ENCODE measurements at regions of chr14 and their contacts with region 1.

Region 1: DNA sequence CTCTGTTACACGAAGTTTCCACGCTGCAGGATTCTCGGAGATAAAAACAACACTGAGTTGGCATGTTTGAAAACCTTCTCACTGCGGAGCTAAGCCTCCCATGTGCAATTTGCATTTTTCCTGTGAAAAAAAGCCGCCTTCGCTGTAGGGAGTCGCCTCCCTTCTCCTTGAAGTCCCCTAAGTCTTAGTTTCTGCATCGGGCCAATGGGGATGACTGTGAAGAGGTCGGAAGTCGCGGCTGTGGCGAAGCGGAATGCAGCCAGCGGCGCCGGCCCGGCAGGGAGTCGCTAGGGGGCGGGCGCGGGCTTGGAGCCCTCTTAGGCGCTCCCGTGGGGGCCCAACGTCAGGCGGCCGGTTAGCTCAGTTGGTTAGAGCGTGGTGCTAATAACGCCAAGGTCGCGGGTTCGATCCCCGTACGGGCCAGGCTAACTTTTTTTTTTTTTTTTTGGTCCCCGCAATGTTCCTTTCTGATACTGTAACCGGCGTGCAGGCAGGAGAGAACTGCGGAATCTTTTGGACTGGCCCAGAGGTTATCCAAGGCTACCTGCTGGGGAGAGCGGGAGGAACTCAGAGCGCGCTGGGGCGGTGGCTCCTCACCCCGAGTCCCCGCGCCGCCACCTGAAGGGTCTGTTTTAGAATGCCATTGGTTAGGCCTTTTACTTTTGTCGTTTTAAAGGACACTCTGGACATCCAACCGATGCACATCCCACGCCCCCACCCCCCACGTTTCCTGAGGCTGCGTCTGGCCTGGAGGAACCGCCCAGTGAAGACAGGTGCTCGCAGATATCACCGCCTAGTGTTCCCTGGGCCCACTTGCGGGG is 2.6 kb upstream of the ZNF839 start:
- DNase-seq: peak; percentile 86 to 100 (median 95)
- ATAC-seq: peak; percentile 55
- H3K4me3 ChIP-seq: peak overlapping the region; percentile 57 to 74
- H3K4me3 Mint-ChIP-seq: peak overlapping the region; percentile 93
- H3K27ac ChIP-seq: peak overlapping the region; percentile 42 to 73
- H3K27ac Mint-ChIP-seq: peak overlapping the region; percentile 94
- H3K4me1 ChIP-seq: peaks cover 42% of the 10 kb centered on the region
- H3K4me1 Mint-ChIP-seq: peaks cover 59% of the 10 kb centered on the region
- H3K27me3 ChIP-seq: no peaks in the 10 kb centered on the region
- H3K27me3 Mint-ChIP-seq: no peaks in the 10 kb centered on the region
- CTCF ChIP-seq: peak; percentile 82

Region 2: GRCh38 chr14:102020058-102020971 is 296.6 kb before region 1 on chr14:
- CTCF ChIA-PET with region 1: no interaction called
- POLR2A ChIA-PET with region 1: no interaction called
- intact Hi-C with region 1: loop called in 1 of 2 experiments (anchors 1 kb)
- DNase-seq: peak; percentile 6 to 80 (median 35)
- ATAC-seq: peak; percentile 90
- H3K4me3 ChIP-seq: no peak overlapping the region
- H3K4me3 Mint-ChIP-seq: peak overlapping the region; percentile 64
- H3K27ac ChIP-seq: peak overlapping the region in 1 of 2 experiments; percentile 54
- H3K27ac Mint-ChIP-seq: peak overlapping the region; percentile 90
- H3K4me1 ChIP-seq: peaks cover 24% of the 10 kb centered on the region
- H3K4me1 Mint-ChIP-seq: peaks cover 19% of the 10 kb centered on the region
- H3K27me3 ChIP-seq: no peaks in the 10 kb centered on the region
- H3K27me3 Mint-ChIP-seq: no peaks in the 10 kb centered on the region
- CTCF ChIP-seq: no peak

Region 3: GRCh38 chr14:102086972-102087761 is 229.8 kb before region 1 on chr14 and contains the start of gene HSP90AA1:
- CTCF ChIA-PET with region 1: interaction called, 3 read pairs
- POLR2A ChIA-PET with region 1: no interaction called
- intact Hi-C with region 1: loop called (anchors 1 to 2 kb)
- DNase-seq: peak; percentile 88 to 98 (median 95)
- ATAC-seq: peak; percentile 74
- H3K4me3 ChIP-seq: peak within 1 kb of the TSS; percentile 75 to 78
- H3K4me3 Mint-ChIP-seq: peak within 1 kb of the TSS; percentile 97
- H3K27ac ChIP-seq: peak within 1 kb of the TSS; percentile 96 to 97
- H3K27ac Mint-ChIP-seq: peak within 1 kb of the TSS; percentile 99
- H3K4me1 ChIP-seq: peaks cover 49% of the 10 kb centered on the region
- H3K4me1 Mint-ChIP-seq: peaks cover 58% of the 10 kb centered on the region
- H3K27me3 ChIP-seq: no peaks in the 10 kb centered on the region
- H3K27me3 Mint-ChIP-seq: no peaks in the 10 kb centered on the region
- CTCF ChIP-seq: no peak
- total RNA-seq, gene HSP90AA1: 532 to 539 TPM

Region 4: DNA sequence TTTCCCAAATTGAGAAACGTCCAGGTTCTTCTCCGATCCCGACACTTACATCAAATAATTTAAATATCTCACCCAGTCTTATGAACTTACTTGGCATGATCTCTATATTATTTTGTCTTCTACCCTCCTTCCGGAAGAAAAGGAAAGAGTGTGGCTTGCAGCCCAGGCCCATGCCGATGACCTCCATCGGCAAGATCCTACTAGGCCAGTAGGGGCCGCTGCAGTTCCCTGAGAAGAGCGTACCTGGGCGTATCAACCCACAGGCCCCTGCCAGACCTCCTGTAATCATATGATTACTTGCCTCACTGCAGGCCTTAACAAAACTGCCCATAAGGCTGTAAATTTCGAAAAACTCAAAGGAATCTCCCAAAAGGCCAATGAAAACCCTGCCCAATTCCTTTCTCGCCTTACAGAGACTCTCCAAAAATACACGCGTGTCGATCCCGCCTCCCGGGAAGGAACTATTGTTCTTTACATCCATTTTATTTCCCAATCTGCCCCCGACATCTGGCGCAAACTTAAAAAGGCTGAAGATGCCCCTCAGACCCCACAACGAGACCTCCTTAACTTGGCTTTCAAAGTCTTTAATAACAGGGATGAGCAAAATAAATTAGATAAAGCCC is 81.6 kb before region 1 on chr14:
- CTCF ChIA-PET with region 1: interaction called, 10 read pairs
- POLR2A ChIA-PET with region 1: no interaction called
- intact Hi-C with region 1: loop called in 1 of 2 experiments (anchors 1 kb)
- DNase-seq: peak; percentile 45 to 81 (median 77)
- ATAC-seq: peak; percentile 99
- H3K4me3 ChIP-seq: no peak overlapping the region
- H3K4me3 Mint-ChIP-seq: no peak overlapping the region
- H3K27ac ChIP-seq: no peak overlapping the region
- H3K27ac Mint-ChIP-seq: no peak overlapping the region
- H3K4me1 ChIP-seq: no peaks in the 10 kb centered on the region
- H3K4me1 Mint-ChIP-seq: no peaks in the 10 kb centered on the region
- H3K27me3 ChIP-seq: no peaks in the 10 kb centered on the region
- H3K27me3 Mint-ChIP-seq: no peaks in the 10 kb centered on the region
- CTCF ChIP-seq: peak; percentile 73

Region 5: GRCh38 chr14:102362545-102363181 is 45.7 kb after region 1 on chr14 and contains the starts of genes CINP and TECPR2:
- CTCF ChIA-PET with region 1: interaction called, 4 read pairs
- POLR2A ChIA-PET with region 1: interaction called, 3 read pairs
- intact Hi-C with region 1: loop called (anchors 1 kb)
- DNase-seq: peak; percentile 93 to 97 (median 96)
- ATAC-seq: peak; percentile 90
- H3K4me3 ChIP-seq: peak within 1 kb of the TSS; percentile 67 to 75
- H3K4me3 Mint-ChIP-seq: peak within 1 kb of the TSS; percentile 95
- H3K27ac ChIP-seq: peak within 1 kb of the TSS; percentile 82 to 86
- H3K27ac Mint-ChIP-seq: peak within 1 kb of the TSS; percentile 96
- H3K4me1 ChIP-seq: peaks cover 15% of the 10 kb centered on the region
- H3K4me1 Mint-ChIP-seq: peaks cover 24% of the 10 kb centered on the region
- H3K27me3 ChIP-seq: no peaks in the 10 kb centered on the region
- H3K27me3 Mint-ChIP-seq: no peaks in the 10 kb centered on the region
- CTCF ChIP-seq: no peak
- total RNA-seq, gene CINP: 15.9 to 19.2 TPM
- total RNA-seq, gene TECPR2: 3.4 to 5.8 TPM

Region 6: GRCh38 chr14:102774391-102775153 is 457.6 kb after region 1 on chr14:
- CTCF ChIA-PET with region 1: no interaction called
- POLR2A ChIA-PET with region 1: no interaction called
- intact Hi-C with region 1: loop called in 1 of 2 experiments (anchors 5 kb)
- DNase-seq: peak; percentile 32 to 87 (median 67)
- ATAC-seq: peak; percentile 32
- H3K4me3 ChIP-seq: no peak overlapping the region
- H3K4me3 Mint-ChIP-seq: peak overlapping the region; percentile 57
- H3K27ac ChIP-seq: peak overlapping the region; percentile 46 to 66
- H3K27ac Mint-ChIP-seq: peak overlapping the region; percentile 93
- H3K4me1 ChIP-seq: peaks cover 24% of the 10 kb centered on the region
- H3K4me1 Mint-ChIP-seq: peaks cover 28% of the 10 kb centered on the region
- H3K27me3 ChIP-seq: no peaks in the 10 kb centered on the region
- H3K27me3 Mint-ChIP-seq: no peaks in the 10 kb centered on the region
- CTCF ChIP-seq: peak; percentile 67